ENCODE measurements at regions of chr15 and their contacts with region 1.

Region 1: GRCh38 chr15:48800811-48801455 is 9.9 kb downstream of the CEP152 start:
- DNase-seq: no peak
- H3K4me3 ChIP-seq: no peak overlapping the region
- H3K27ac ChIP-seq: no peak overlapping the region
- H3K4me1 ChIP-seq: no peaks in the 10 kb centered on the region
- H3K27me3 ChIP-seq: no peaks in the 10 kb centered on the region
- CTCF ChIP-seq: peak in 2 of 3 donors; percentile 48 to 61
- EP300 ChIP-seq: no peak
- POLR2A ChIP-seq: no peak

Region 2: DNA sequence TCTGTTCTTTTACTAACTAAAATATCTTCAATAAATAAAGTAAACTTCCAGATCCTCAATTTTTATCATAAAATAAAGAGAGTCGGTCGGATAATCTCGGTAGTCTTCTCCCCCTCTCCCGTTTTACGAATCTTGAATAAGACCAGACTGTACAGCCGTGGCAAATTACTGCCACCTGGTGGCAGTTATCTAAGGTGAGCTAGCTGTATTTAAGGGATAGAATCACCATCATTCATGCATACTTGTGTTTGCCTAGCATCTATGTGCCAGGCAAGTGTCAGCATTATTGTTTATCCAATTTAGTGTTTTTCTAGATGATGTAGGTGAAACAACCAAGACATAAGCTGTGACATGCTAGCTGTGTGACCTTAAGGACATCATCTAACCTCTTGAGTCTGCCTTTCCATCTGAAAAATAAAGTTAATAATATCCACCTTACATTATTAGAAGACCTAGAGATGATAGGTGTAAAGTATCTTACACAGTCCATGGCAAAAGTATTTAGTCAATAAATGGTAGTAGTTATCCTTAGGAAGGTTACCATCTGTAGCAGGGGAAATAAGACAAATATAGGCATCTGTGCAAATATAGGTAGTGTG is 448.4 kb before region 1 on chr15:
- intact Hi-C with region 1: loop called in 1 of 4 experiments (anchors 10 kb)
- DNase-seq: peak in 4 of 5 donors; percentile 44 to 60 (median 44)
- H3K4me3 ChIP-seq: no peak overlapping the region
- H3K27ac ChIP-seq: no peak overlapping the region
- H3K4me1 ChIP-seq: no peaks in the 10 kb centered on the region
- H3K27me3 ChIP-seq: no peaks in the 10 kb centered on the region
- CTCF ChIP-seq: peak; percentile 52 to 62 (median 53)
- EP300 ChIP-seq: no peak
- POLR2A ChIP-seq: no peak

Region 3: DNA sequence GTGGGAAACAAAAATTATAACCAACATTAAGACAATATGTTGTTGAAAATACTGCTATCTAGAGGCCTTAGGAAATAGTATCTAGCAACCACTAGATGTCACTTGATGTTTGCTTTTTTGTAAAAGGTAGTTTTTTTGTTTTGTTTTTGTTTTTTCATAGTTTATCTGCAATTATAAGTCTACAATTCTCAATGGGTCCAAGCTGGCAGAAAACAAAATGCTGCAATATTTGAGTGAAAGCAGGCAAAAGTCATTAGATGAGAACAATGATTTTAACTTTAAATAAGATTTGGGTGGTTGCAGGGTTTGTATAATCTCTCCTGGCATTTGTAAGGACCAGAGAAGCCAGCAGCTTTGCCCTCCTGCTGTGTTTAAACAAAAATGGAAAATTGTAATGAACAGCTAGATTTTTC is 442.7 kb before region 1 on chr15:
- intact Hi-C with region 1: loop called in 2 of 4 experiments (anchors 5 to 10 kb)
- DNase-seq: no peak
- H3K4me3 ChIP-seq: no peak overlapping the region
- H3K27ac ChIP-seq: no peak overlapping the region
- H3K4me1 ChIP-seq: no peaks in the 10 kb centered on the region
- H3K27me3 ChIP-seq: no peaks in the 10 kb centered on the region
- CTCF ChIP-seq: peak; percentile 26 to 62 (median 48)
- EP300 ChIP-seq: no peak
- POLR2A ChIP-seq: no peak

Region 4: GRCh38 chr15:48722764-48723661 is 77.9 kb before region 1 on chr15:
- intact Hi-C with region 1: no loop called
- DNase-seq: no peak
- H3K4me3 ChIP-seq: no peak overlapping the region
- H3K27ac ChIP-seq: no peak overlapping the region
- H3K4me1 ChIP-seq: no peaks in the 10 kb centered on the region
- H3K27me3 ChIP-seq: no peaks in the 10 kb centered on the region
- CTCF ChIP-seq: no peak
- EP300 ChIP-seq: no peak
- POLR2A ChIP-seq: no peak

Region 5: GRCh38 chr15:49199666-49200065 is 398.7 kb after region 1 on chr15:
- intact Hi-C with region 1: no loop called
- DNase-seq: no peak
- H3K4me3 ChIP-seq: no peak overlapping the region
- H3K27ac ChIP-seq: no peak overlapping the region
- H3K4me1 ChIP-seq: peaks cover 3% of the 10 kb centered on the region
- H3K27me3 ChIP-seq: no peaks in the 10 kb centered on the region
- CTCF ChIP-seq: no peak
- EP300 ChIP-seq: no peak
- POLR2A ChIP-seq: no peak

Measured in ovary (tissue), 10 donors.